ENCODE measurements at regions of chr6 and their contacts with region 1.

Region 1: GRCh38 chr6:44221291-44221960 is 2.0 kb upstream of the SLC29A1 start:
- DNase-seq: peak; percentile 77 to 91
- H3K4me3 ChIP-seq: no peak overlapping the region
- H3K27ac ChIP-seq: no peak overlapping the region
- H3K4me1 ChIP-seq: peaks cover 35% of the 10 kb centered on the region
- H3K27me3 ChIP-seq: no peaks in the 10 kb centered on the region
- CTCF ChIP-seq: peak; percentile 86

Region 2: DNA sequence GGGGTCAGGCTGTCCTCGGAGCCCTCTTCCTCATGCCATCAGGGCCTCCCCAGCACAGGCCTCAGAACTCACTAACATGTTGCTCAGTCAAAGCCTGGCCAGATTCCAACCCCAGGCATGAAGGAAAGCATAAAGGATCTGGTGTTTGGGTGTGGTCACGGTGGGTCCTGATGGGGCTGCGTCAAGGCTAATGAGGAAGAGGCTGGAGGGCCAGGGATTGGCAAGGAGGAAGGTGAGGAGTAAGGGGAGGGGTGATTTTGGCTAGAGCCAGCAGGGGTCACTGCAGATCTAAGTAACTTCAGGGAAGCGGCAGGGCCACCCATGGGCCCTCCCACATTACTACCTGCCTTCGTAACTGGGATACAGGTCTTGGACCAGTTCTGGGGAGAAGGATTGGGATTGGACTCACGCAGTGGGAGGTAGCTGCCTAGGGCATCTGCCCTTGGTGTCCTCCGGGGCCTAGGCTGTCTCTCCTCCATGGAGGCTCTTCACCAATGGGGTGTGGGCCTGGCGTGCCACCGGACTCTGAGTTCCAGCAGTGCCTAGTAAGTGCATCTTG is 497.6 kb before region 1 on chr6:
- CTCF ChIA-PET with region 1: no interaction called
- POLR2A ChIA-PET with region 1: no interaction called
- intact Hi-C with region 1: no loop called
- DNase-seq: peak; percentile 69 to 74
- H3K4me3 ChIP-seq: no peak overlapping the region
- H3K27ac ChIP-seq: no peak overlapping the region
- H3K4me1 ChIP-seq: peaks cover 28% of the 10 kb centered on the region
- H3K27me3 ChIP-seq: no peaks in the 10 kb centered on the region
- CTCF ChIP-seq: peak; percentile 83

Region 3: DNA sequence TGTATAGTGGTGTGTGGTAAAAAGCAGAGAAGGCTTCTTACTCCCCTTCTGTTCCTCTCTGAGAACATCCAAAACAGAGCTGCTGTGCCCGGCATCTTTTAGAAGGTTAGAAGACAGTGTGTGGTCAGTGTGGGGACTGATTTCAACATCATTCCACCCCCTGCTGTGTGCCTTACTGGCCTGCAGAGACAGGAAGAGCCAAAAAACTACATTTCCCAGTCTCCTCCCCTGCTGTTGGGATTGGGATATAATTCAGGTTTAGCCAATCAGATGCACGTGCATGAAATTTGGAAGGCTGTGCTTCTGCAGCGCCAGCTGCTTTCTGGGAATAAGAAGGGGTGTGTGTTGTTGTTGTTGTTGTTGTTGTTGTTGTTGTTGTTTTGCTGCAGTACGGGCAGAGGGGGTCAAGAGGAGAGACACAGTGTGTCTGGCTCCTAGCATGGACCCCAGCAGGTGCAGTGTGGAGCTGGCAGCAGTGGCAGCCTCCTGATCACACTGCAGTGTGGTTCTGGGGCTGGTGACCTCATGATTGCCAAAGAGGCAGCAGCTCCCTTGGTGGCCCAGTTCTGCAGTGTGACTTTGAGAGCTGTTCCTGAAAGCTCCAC is 168.9 kb before region 1 on chr6:
- CTCF ChIA-PET with region 1: no interaction called
- POLR2A ChIA-PET with region 1: no interaction called
- intact Hi-C with region 1: no loop called
- DNase-seq: peak in 1 of 2 experiments; percentile 56
- H3K4me3 ChIP-seq: no peak overlapping the region
- H3K27ac ChIP-seq: peak overlapping the region; percentile 96
- H3K4me1 ChIP-seq: peaks cover 100% of the 10 kb centered on the region
- H3K27me3 ChIP-seq: no peaks in the 10 kb centered on the region
- CTCF ChIP-seq: no peak

Region 4: GRCh38 chr6:44084231-44085014 is 137.0 kb before region 1 on chr6:
- CTCF ChIA-PET with region 1: no interaction called
- POLR2A ChIA-PET with region 1: interaction called, 11 read pairs
- intact Hi-C with region 1: no loop called
- DNase-seq: no peak
- H3K4me3 ChIP-seq: no peak overlapping the region
- H3K27ac ChIP-seq: no peak overlapping the region
- H3K4me1 ChIP-seq: peaks cover 14% of the 10 kb centered on the region
- H3K27me3 ChIP-seq: no peaks in the 10 kb centered on the region
- CTCF ChIP-seq: no peak

Region 5: DNA sequence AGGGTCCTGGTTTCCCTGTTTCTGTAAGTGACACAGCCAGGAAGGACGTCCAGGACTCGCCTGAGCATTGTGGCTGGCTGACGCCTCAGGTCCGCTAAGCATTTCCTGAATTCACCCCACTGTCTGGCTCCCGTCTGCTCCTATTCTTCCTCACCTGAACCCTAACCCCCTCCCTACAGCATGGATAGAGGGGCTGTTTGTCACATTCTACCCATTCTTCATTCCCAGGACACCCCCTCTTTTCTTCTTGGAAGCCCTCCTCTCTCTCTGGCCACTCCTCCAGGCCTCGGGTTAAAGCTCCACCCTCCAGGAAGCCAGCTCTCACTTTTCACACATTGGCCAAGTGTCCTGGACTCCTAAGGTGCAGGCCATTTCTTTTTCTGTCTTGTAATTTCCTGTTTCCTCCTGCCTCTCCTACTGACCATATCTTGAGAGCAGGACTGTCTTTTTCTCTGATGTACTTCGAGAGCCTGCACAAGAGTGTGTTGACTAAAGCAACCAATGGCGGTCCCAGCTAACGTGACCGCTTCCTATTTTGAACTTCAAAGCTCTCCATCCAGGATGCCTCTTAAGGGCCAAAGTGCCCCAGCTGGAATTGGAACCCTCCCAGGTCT is 28.9 kb before region 1 on chr6:
- CTCF ChIA-PET with region 1: interaction called, 10 read pairs
- POLR2A ChIA-PET with region 1: interaction called, 14 read pairs
- intact Hi-C with region 1: no loop called
- DNase-seq: no peak
- H3K4me3 ChIP-seq: no peak overlapping the region
- H3K27ac ChIP-seq: no peak overlapping the region
- H3K4me1 ChIP-seq: no peaks in the 10 kb centered on the region
- H3K27me3 ChIP-seq: no peaks in the 10 kb centered on the region
- CTCF ChIP-seq: no peak

Region 6: GRCh38 chr6:44246663-44247337 is 25.4 kb after region 1 on chr6 and contains the start of gene HSP90AB1:
- CTCF ChIA-PET with region 1: interaction called, 23 read pairs
- POLR2A ChIA-PET with region 1: interaction called, 6 read pairs
- intact Hi-C with region 1: no loop called
- DNase-seq: peak; percentile 94 to 97
- H3K4me3 ChIP-seq: peak within 1 kb of the TSS; percentile 98
- H3K27ac ChIP-seq: peak within 1 kb of the TSS; percentile 94
- H3K4me1 ChIP-seq: peaks cover 35% of the 10 kb centered on the region
- H3K27me3 ChIP-seq: no peaks in the 10 kb centered on the region
- CTCF ChIP-seq: no peak
- total RNA-seq, gene HSP90AB1: 895 and 1,136 TPM in 2 replicates

Region 7: DNA sequence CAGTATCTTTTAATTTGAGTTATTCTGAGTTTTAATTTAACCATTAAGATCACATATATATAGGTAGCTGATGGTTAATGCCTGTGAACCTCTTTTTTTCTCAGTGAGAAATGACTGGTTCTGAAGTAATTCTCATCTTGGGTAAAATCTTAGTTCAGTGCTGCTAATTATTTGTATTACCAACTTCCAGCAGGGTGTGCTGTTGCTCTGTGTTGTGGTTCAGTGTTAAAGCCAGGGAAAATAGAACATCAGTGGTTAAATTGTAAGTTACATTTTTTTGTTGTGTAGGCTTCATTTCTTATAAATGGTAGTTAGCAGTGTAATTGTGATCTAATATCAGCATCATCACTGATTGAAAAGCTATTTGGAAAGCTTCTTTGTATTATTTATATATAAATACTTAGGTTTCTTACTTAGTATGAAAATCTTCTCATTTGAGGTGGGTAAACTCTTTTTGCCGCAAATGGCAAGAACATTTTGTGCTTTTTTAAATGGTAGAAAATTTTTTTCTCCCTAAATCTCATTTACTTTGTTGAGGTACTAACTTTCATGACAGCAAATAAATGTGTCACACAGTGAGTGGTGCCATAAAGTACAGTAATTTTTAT is 209.8 kb after region 1 on chr6:
- CTCF ChIA-PET with region 1: interaction called, 10 read pairs
- POLR2A ChIA-PET with region 1: no interaction called
- intact Hi-C with region 1: no loop called
- DNase-seq: peak; percentile 28 to 45
- H3K4me3 ChIP-seq: no peak overlapping the region
- H3K27ac ChIP-seq: no peak overlapping the region
- H3K4me1 ChIP-seq: peaks cover 11% of the 10 kb centered on the region; the same call in 1 of the 2 replicates
- H3K27me3 ChIP-seq: no peaks in the 10 kb centered on the region
- CTCF ChIP-seq: peak; percentile 82

Measured in PC-9 (cell line).